ENCODE measurements at regions of chr13 and their contacts with region 1.

Region 1: DNA sequence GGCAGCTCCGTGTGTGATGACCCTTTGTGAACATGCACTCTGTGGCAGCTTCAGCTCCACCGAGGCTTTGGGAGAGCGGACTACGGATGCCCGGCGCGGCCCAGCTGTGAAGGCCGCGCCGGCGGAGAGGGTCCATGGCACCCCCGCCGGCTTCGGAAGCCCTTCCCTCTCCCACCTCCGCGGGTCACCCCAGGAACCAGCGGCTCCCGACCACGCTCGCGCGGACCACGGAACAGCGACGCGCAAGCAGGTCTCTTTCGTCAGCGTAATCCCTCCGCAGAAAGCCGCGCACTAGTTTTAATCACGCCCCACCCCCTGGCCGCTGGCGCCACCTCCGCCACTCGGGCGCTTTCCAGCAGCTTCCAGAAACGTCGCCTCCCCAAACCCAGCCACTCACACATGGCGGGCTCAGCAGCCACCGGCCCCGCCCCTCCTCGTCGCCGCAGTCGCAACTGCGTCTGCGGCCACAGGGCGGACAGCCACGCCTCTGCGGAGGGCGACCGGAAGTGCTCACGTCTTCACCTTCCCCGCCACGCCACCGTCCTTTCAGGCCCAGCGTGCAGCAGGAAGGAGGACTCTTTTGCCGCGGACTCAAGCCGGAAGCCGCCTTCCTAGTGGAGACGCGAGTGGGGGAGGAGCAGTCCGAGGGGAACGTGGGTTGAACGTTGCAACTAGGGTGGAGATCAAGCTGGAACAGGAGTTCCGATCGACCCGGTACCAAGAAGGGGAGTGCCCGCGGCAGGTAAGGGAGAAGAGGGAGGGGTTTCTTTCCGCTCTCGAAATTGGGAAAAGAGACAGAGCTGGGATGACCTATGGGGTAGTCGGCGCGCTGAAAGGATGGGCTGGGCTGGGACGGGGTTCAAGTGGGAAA is at the start of gene USPL1:
- DNase-seq: peak; percentile 99
- H3K4me3 ChIP-seq: peak within 1 kb of the TSS; percentile 71 to 78 (median 75)
- H3K27ac ChIP-seq: peak within 1 kb of the TSS; percentile 96
- H3K4me1 ChIP-seq: peaks cover 3% of the 10 kb centered on the region
- H3K27me3 ChIP-seq: no peaks in the 10 kb centered on the region
- CTCF ChIP-seq: peak in 1 of 2 donors; percentile 20
- total RNA-seq, gene USPL1: 12.4 to 13.5 TPM

Region 2: DNA sequence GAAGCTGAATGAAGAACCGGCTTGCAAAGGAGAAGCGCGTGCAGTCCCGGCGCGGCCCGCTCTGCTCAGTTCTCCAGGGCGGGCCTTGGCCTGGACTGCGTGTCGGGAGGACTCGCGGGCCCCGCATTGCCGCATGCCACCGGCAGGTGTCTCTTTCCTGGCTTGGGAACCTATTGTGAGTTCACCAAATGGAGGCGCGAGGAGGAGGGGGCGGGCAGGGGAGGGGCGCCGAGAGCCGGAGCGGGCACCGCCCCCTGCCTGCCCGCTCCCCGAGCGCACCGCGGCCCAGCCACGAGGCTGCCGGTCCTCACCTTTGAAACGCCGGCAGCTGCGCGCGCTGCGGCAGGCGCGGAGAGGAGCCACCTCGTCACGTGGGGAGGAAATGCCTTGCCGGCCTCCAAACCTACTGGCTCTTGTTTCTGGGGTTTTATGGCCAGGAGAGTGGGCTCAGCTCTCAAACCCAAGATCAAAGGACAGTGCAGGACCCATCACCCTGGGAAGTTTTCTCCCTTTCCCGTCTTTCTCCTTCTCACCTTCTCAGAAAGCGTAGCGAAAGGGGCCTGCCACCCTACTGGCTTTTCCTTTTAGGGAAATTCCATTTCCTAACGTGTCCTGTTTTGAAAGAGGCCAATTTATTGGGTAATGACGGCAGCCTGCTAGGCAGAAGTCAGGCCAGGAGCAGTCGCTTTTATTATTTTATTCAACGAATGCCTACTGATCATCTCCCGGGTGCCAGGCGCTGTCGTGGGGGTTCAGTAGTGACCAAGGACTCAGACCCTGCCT is 209.0 kb before region 1 on chr13:
- CTCF ChIA-PET with region 1: no interaction called
- dilution Hi-C with region 1: no loop called
- in situ Hi-C with region 1: no loop called
- intact Hi-C with region 1: loop called (anchors 5 kb)
- DNase-seq: peak; percentile 73
- H3K4me3 ChIP-seq: peak overlapping the region in 1 of 3 experiments; percentile 24
- H3K27ac ChIP-seq: peak overlapping the region; percentile 23
- H3K4me1 ChIP-seq: peaks cover 17% of the 10 kb centered on the region
- H3K27me3 ChIP-seq: no peaks in the 10 kb centered on the region
- CTCF ChIP-seq: peak; percentile 36 to 75

Region 3: GRCh38 chr13:30673669-30674521 is 56.3 kb after region 1 on chr13:
- CTCF ChIA-PET with region 1: no interaction called
- dilution Hi-C with region 1: no loop called
- in situ Hi-C with region 1: no loop called
- intact Hi-C with region 1: loop called (anchors 1 kb)
- DNase-seq: peak; percentile 81
- H3K4me3 ChIP-seq: peak overlapping the region; percentile 23 to 56 (median 52)
- H3K27ac ChIP-seq: no peak overlapping the region
- H3K4me1 ChIP-seq: peaks cover 9% of the 10 kb centered on the region
- H3K27me3 ChIP-seq: no peaks in the 10 kb centered on the region
- CTCF ChIP-seq: peak; percentile 37 to 49

Region 4: GRCh38 chr13:30792285-30793000 is 174.9 kb after region 1 on chr13:
- CTCF ChIA-PET with region 1: no interaction called
- dilution Hi-C with region 1: no loop called
- in situ Hi-C with region 1: no loop called
- intact Hi-C with region 1: loop called (anchors 1 kb)
- DNase-seq: peak; percentile 91
- H3K4me3 ChIP-seq: no peak overlapping the region
- H3K27ac ChIP-seq: peak overlapping the region; percentile 13
- H3K4me1 ChIP-seq: peaks cover 40% of the 10 kb centered on the region
- H3K27me3 ChIP-seq: no peaks in the 10 kb centered on the region
- CTCF ChIP-seq: peak; percentile 1 to 57

Region 5: DNA sequence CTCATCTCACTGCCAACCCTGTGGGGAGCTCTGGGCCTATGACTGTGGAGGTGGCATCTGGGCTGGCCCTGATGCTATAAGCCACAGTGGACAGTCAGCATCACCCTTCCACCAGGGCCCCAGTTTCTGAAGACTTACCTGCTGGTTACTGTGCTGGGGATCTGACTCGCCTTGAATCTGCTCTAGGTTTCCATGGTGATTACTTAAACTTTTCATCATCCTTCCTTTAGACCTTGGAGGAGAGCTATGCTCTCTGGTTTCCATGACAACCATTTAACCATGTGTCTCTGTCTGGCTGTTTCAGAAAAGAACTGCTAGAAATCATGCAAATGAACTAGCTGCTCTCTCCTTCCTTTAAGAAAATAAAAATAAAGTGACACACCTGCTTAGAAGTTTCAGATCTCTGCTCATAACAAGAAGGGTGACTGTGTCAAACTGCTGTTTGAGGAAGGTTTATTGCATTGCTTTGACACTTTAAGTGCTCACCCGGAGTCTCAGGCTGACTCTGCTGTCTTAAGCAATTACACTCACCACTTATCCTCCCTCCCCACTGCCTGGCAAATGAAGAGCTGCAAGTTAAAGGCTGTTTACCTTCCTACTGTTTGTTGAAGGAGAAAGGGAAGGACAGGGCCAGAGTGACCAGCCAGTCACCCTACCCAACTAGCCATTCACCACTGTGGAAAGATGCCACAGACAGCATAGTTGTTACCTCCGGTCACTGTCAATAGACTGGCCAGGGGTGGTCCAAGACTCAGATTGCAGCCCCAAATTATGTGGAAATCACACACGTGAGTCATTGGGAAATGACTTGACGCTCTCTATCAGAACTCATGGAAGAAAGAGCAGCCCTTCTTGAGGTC is 456.5 kb after region 1 on chr13:
- CTCF ChIA-PET with region 1: no interaction called
- dilution Hi-C with region 1: no loop called
- in situ Hi-C with region 1: no loop called
- intact Hi-C with region 1: no loop called
- DNase-seq: peak; percentile 41
- H3K4me3 ChIP-seq: no peak overlapping the region
- H3K27ac ChIP-seq: no peak overlapping the region
- H3K4me1 ChIP-seq: no peaks in the 10 kb centered on the region
- H3K27me3 ChIP-seq: no peaks in the 10 kb centered on the region
- CTCF ChIP-seq: no peak

Measured in mammary epithelial cell (primary cell).